Activated naive CD4-positive, alpha-beta T cell treated with anti-CD3 and anti-CD28 coated beads for 36 hours (primary cell): ENCODE measurements at regions of chr18 and their contacts with region 1.

Region 1: GRCh38 chr18:59358712-59359575 is at the start of gene LMAN1:
- DNase-seq: peak; percentile 96
- H3K4me3 Mint-ChIP-seq: peak within 1 kb of the TSS; percentile 98
- H3K27ac Mint-ChIP-seq: peak within 1 kb of the TSS; percentile 98
- H3K4me1 Mint-ChIP-seq: peaks cover 36% of the 10 kb centered on the region
- H3K27me3 Mint-ChIP-seq: no peaks in the 10 kb centered on the region
- total RNA-seq, gene LMAN1: 146 to 151 TPM

Region 2: GRCh38 chr18:59308248-59308937 is 50.6 kb before region 1 on chr18:
- CTCF ChIA-PET with region 1: interaction called, 3 read pairs
- intact Hi-C with region 1: loop called (anchors 1 kb)
- DNase-seq: peak; percentile 67
- H3K4me3 Mint-ChIP-seq: peak overlapping the region; percentile 48
- H3K27ac Mint-ChIP-seq: no peak overlapping the region
- H3K4me1 Mint-ChIP-seq: no peaks in the 10 kb centered on the region
- H3K27me3 Mint-ChIP-seq: peaks cover 29% of the 10 kb centered on the region

Region 3: GRCh38 chr18:59340817-59341216 is 18.1 kb before region 1 on chr18:
- CTCF ChIA-PET with region 1: interaction called, 7 read pairs
- intact Hi-C with region 1: loop called (anchors 1 kb)
- DNase-seq: no peak
- H3K4me3 Mint-ChIP-seq: no peak overlapping the region
- H3K27ac Mint-ChIP-seq: peak overlapping the region; percentile 25
- H3K4me1 Mint-ChIP-seq: peaks cover 48% of the 10 kb centered on the region
- H3K27me3 Mint-ChIP-seq: no peaks in the 10 kb centered on the region